HEK293 (cell line): ENCODE measurements at regions of chr12 and their contacts with region 1.

Region 1: GRCh38 chr12:120649442-120650232 is 9.2 kb downstream of the CABP1 start:
- H3K4me3 ChIP-seq: no peak overlapping the region
- H3K27ac ChIP-seq: no peak overlapping the region
- H3K4me1 ChIP-seq: no peaks in the 10 kb centered on the region
- CTCF ChIP-seq: no peak; the same call in 1 of the 2 replicates

Region 2: GRCh38 chr12:120394483-120395367 is 254.9 kb before region 1 on chr12:
- CTCF ChIA-PET with region 1: no interaction called
- POLR2A ChIA-PET with region 1: no interaction called
- H3K4me3 ChIP-seq: no peak overlapping the region
- H3K27ac ChIP-seq: no peak overlapping the region
- H3K4me1 ChIP-seq: no peaks in the 10 kb centered on the region
- CTCF ChIP-seq: no peak

Region 3: GRCh38 chr12:120406069-120406468 is 243.6 kb before region 1 on chr12:
- CTCF ChIA-PET with region 1: no interaction called
- POLR2A ChIA-PET with region 1: no interaction called
- H3K4me3 ChIP-seq: no peak overlapping the region
- H3K27ac ChIP-seq: no peak overlapping the region
- H3K4me1 ChIP-seq: peaks cover 3% of the 10 kb centered on the region; the same call in 1 of the 2 replicates
- CTCF ChIP-seq: no peak

Region 4: DNA sequence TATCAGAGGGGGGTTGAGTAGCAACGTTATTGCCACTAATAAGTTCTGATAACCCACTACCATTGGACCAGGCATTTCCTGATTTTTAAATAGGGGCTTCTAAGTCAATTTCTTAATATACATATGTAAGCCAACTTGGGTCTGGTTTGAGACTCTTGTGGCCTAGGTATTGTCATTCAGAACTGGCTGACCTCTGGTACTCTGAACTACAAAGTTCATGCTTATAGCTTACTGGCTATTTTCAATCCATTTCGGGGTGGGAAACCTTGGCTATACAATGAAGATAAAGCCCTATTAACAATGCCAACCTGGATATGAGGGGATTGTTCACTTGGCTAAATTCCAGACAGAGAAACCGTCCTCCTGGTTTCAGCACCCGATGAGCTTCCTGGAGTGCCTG is 145.1 kb before region 1 on chr12:
- CTCF ChIA-PET with region 1: no interaction called
- POLR2A ChIA-PET with region 1: no interaction called
- H3K4me3 ChIP-seq: no peak overlapping the region
- H3K27ac ChIP-seq: no peak overlapping the region
- H3K4me1 ChIP-seq: no peaks in the 10 kb centered on the region
- CTCF ChIP-seq: no peak

Region 5: GRCh38 chr12:120588948-120589930 is 60.4 kb before region 1 on chr12:
- CTCF ChIA-PET with region 1: interaction called, 77 read pairs
- POLR2A ChIA-PET with region 1: no interaction called
- H3K4me3 ChIP-seq: no peak overlapping the region
- H3K27ac ChIP-seq: no peak overlapping the region
- H3K4me1 ChIP-seq: no peaks in the 10 kb centered on the region
- CTCF ChIP-seq: no peak

Region 6: DNA sequence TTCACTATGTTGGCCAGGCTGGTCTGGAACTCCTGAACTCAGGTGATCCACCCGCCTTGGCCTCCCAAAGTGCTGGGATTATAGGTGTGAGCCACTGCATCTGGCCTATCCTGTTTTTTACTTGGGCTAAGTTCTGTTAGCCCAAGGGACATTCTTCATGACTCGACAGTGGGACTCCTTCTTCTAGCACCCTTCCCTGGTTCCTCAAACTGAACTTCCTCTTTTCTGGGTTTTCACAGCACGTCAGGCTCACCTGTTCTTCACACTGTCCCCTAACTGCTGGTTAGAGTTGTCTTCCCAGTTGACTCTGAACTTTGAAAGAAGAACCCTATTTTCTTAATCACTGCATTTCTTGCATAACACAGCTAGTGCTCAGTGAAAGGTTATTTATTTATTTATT is 13.2 kb after region 1 on chr12:
- CTCF ChIA-PET with region 1: interaction called, 19 read pairs
- POLR2A ChIA-PET with region 1: interaction called, 4 read pairs
- H3K4me3 ChIP-seq: no peak overlapping the region
- H3K27ac ChIP-seq: no peak overlapping the region
- H3K4me1 ChIP-seq: no peaks in the 10 kb centered on the region
- CTCF ChIP-seq: no peak

Region 7: DNA sequence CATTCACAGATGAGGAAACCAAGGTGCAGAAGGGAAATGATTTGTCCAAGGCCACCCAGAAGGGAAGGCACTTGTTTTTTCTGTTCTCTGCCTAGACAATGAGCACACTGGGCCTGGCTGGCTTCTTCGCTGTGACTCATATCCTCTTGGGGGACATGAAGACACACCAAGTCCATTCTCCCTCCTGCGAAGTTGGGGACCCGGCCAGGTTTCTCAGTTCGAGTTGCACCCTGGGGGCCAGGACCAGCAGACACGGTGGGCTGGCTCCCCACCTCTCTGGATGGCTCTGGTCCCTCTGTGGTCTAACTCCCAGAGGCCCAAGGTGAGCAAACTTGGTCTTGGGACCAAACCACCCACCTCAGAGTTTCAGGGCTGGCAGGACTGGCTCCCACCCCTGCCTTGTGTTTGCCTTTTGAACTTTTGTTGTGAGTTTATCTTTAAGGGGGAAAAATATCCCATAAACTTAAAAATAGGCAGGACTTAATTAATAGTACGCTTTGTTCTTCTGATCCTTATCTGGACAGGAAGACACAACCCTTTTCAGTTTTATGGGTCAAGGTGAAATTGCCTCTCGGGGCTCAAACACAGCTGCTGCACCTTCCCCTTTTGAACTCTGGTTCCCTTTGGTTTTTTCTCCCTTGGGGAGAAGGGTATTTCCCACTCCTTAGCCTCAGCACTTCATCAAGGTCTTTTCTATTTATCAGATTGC is 28.3 kb after region 1 on chr12:
- CTCF ChIA-PET with region 1: interaction called, 25 read pairs
- POLR2A ChIA-PET with region 1: no interaction called
- H3K4me3 ChIP-seq: no peak overlapping the region
- H3K27ac ChIP-seq: no peak overlapping the region
- H3K4me1 ChIP-seq: no peaks in the 10 kb centered on the region
- CTCF ChIP-seq: no peak

Region 8: GRCh38 chr12:120702637-120703036 is 53.0 kb after region 1 on chr12:
- CTCF ChIA-PET with region 1: interaction called, 42 read pairs
- POLR2A ChIA-PET with region 1: no interaction called
- H3K4me3 ChIP-seq: no peak overlapping the region
- H3K27ac ChIP-seq: no peak overlapping the region
- H3K4me1 ChIP-seq: no peaks in the 10 kb centered on the region
- CTCF ChIP-seq: no peak

Region 9: GRCh38 chr12:120971299-120972179 is 321.9 kb after region 1 on chr12:
- CTCF ChIA-PET with region 1: interaction called, 19 read pairs
- POLR2A ChIA-PET with region 1: no interaction called
- H3K4me3 ChIP-seq: no peak overlapping the region
- H3K27ac ChIP-seq: no peak overlapping the region
- H3K4me1 ChIP-seq: no peaks in the 10 kb centered on the region
- CTCF ChIP-seq: no peak

Region 10: GRCh38 chr12:121765573-121765972 is 1115.9 kb after region 1 on chr12:
- CTCF ChIA-PET with region 1: no interaction called
- POLR2A ChIA-PET with region 1: no interaction called
- H3K4me3 ChIP-seq: no peak overlapping the region
- H3K27ac ChIP-seq: no peak overlapping the region
- H3K4me1 ChIP-seq: peaks cover 8% of the 10 kb centered on the region
- CTCF ChIP-seq: no peak